Vagina (tissue), 2 donors: ENCODE measurements at regions of chr6 and their contacts with region 1.

Region 1: DNA sequence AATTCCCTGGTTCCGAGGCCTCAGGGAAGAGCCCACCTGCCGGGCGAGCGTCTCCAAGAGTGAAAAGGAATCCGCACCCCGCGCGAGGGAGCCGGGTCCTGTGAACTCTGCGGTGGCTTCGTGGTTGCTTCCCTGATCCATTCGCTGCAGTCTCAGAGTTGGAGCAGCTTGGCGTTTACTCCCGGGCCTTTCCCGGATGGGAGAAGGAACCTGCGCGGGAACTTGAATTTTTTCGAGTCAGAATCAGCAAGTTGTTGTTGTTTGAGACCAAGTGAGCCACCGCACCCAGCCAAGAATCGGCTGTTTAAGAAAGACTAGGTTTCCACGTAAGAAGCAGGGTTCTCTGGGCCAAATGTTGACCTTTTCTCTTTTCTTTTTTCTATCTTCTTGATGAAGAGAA is 12.9 kb downstream of the PRSS16 start:
- DNase-seq: no peak
- H3K4me3 ChIP-seq: no peak overlapping the region
- H3K27ac ChIP-seq: no peak overlapping the region
- H3K4me1 ChIP-seq: no peaks in the 10 kb centered on the region
- H3K27me3 ChIP-seq: no peaks in the 10 kb centered on the region
- CTCF ChIP-seq: no peak
- POLR2A ChIP-seq: no peak

Region 2: DNA sequence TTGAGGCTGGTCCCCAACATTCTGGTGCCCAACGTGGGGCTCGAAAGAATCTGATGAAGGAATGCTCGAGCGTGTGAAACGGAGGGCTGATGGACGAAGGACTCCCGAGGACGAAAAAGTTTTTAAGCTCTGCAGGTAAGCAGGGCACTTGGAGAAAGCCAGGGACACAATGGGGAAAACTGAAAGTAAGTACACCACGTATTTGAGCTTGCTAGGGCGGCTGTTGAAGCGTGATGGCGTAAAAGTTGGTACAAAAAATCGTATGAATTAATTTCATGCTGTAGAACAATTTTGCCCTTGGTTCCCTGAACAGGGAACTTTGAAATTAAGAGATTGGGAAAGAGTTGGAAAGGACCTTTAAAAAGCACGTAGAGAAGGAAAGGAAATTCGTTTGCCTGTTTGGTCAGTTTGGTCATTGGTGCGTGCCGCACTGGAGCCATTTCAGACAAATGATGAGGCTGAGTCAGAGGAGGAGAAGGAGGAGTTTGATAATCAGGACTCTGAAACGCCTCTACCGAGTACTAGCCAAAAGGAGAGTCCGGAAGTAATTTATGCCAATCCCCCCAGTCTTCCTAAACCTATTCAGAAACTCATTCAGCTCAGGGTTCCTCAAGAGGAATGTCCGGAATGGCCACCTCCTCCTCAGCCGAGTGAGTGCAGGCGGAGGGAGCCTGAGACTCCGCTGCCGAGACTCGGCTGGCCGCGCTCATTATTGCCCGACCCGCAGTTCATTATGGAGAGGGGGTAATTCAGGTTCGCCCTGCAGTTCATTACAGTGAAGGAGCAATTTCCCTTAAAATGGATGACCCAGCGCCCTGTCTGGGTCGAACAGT is 72.1 kb before region 1 on chr6:
- intact Hi-C with region 1: no loop called
- DNase-seq: no peak
- H3K4me3 ChIP-seq: peak overlapping the region; percentile 58 to 60
- H3K27ac ChIP-seq: peak overlapping the region; percentile 84
- H3K4me1 ChIP-seq: no peaks in the 10 kb centered on the region
- H3K27me3 ChIP-seq: no peaks in the 10 kb centered on the region
- CTCF ChIP-seq: no peak
- POLR2A ChIP-seq: peak in 1 of 2 donors; percentile 24

Region 3: DNA sequence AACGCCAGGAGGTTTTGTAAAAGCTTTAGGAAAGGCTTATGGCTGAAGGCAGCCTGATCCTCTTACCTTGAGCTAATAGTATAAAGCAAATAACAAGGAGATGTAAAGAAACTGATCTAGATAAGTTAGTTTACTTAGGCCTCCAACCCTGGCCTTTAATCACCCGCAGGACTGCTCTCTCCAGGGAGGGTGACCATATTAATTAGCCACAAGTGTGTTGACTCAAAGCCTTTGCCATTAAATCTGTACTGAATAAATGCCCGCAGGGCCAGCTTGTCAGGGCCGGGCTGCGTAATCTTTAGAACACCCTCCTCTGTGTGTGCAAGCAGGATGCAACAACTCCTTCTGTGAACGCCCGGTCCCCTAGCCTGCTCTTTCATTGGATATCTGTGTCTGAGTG is 18.9 kb before region 1 on chr6:
- intact Hi-C with region 1: no loop called
- DNase-seq: no peak
- H3K4me3 ChIP-seq: no peak overlapping the region
- H3K27ac ChIP-seq: no peak overlapping the region
- H3K4me1 ChIP-seq: peaks cover 6% of the 10 kb centered on the region
- H3K27me3 ChIP-seq: no peaks in the 10 kb centered on the region
- CTCF ChIP-seq: no peak
- POLR2A ChIP-seq: no peak

Region 4: DNA sequence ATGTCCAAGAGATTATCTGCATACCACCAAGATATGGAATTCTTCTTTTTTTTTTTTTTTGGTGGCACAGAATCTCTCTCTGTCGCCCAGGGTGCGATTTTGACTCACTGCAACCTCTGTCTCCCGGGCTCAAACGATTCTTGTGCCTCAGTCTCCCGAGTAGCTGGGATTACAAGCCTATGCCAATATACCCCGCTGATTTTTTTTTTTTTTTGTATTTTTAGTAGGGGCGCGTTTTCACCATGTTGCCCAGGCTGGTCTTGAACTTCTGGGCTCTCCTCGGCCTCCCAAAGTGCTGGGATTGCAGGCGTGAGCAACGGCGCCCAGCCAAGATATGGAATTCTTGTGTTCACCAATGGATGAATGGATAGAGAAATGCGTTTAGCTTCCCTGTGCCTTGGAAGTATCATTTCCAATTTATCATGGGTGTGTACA is 20.8 kb after region 1 on chr6:
- intact Hi-C with region 1: loop called (anchors 1 kb)
- DNase-seq: no peak
- H3K4me3 ChIP-seq: no peak overlapping the region
- H3K27ac ChIP-seq: no peak overlapping the region
- H3K4me1 ChIP-seq: no peaks in the 10 kb centered on the region
- H3K27me3 ChIP-seq: no peaks in the 10 kb centered on the region
- CTCF ChIP-seq: no peak
- POLR2A ChIP-seq: no peak